ENCODE measurements at regions of chr2 and their contacts with region 1.

Region 1: DNA sequence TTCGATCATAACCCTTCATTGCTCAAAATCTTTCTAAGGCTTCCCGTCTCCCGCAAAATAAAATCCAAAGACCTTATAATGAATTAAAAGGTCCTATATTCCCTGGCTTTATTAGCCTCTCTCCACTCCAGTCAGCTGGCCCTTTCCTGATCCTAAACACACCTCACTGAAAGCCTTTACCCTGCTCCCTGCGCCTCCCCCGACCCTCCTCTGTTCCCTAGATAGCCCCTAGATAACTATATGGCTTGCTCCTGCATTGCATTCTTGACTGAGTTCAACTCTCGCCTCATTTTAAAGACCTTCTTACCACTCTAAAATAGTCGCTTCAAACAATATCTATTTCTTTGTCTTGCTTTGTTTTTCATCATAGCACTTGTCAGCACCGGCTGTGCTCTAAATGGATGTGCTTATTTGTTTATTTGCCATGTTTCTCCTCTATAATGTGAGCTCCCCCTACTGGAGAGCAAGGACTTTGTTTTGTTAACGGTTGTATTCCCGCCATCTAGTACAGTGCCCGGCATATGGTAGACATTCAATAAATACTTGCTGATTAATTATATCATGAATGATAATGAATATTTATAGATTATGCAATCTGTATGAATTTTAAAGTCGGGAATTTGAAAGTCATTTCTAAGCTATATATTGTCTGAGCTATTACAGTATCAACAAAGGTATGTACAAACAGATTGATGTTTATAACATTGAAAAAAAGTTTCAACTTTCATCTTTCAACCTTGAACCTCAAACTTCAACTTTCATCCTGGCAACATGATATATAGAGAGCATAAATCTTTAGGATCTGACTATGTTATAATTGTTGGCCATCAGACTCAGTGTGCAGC is 32.4 kb upstream of the VIT start:
- DNase-seq: peak; percentile 81
- ATAC-seq: peak; percentile 88
- H3K4me3 ChIP-seq: no peak overlapping the region
- H3K27ac ChIP-seq: no peak overlapping the region
- H3K4me1 ChIP-seq: peaks cover 39% of the 10 kb centered on the region
- H3K27me3 ChIP-seq: no peaks in the 10 kb centered on the region
- CTCF ChIP-seq: peak; percentile 89
- EP300 ChIP-seq: no peak
- POLR2A ChIP-seq: no peak
- RAD21 ChIP-seq: peak; percentile 71

Region 2: GRCh38 chr2:35871672-35872071 is 792.4 kb before region 1 on chr2:
- CTCF ChIA-PET with region 1: no interaction called
- POLR2A ChIA-PET with region 1: no interaction called
- in situ Hi-C with region 1: no loop called
- intact Hi-C with region 1: loop called (anchors 2 kb)
- DNase-seq: peak; percentile 15
- ATAC-seq: peak; percentile 85
- H3K4me3 ChIP-seq: no peak overlapping the region
- H3K27ac ChIP-seq: no peak overlapping the region
- H3K4me1 ChIP-seq: no peaks in the 10 kb centered on the region
- H3K27me3 ChIP-seq: no peaks in the 10 kb centered on the region
- CTCF ChIP-seq: peak; percentile 67
- EP300 ChIP-seq: no peak
- POLR2A ChIP-seq: no peak
- RAD21 ChIP-seq: peak; percentile 23; the same call in 1 of the 2 replicates

Region 3: DNA sequence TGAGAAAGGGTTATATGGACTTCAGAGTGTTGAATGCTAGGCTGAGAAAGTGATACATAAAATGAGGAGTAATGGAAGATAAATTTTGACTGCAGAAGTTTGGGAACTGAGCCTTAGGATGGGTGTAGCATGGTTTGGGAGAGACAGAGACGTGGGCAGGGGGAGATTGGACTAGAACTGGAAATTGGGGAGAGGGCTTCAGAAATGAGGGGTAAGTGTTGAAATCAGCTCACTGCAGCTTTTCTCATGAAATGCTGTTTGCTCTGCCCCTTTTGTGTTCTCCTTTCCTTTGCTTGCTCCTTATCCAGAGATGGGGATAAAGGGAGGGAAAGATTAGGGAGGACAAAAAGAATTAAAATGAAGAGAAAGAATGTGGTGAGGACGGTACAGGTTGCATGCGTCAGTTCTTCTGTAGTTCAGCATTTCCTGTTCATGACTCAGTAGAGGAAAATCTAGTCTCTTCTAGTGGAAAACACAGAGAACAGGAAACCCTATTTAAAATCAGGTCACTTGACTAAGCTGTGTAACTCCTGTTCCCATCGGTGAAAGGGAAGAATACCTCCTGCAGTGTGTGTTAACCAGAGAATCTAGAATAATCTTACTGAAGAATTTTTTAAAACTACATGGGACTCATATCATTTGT is 202.9 kb before region 1 on chr2:
- CTCF ChIA-PET with region 1: no interaction called
- POLR2A ChIA-PET with region 1: no interaction called
- in situ Hi-C with region 1: no loop called
- intact Hi-C with region 1: loop called (anchors 5 kb)
- DNase-seq: peak; percentile 46
- ATAC-seq: no peak
- H3K4me3 ChIP-seq: no peak overlapping the region
- H3K27ac ChIP-seq: no peak overlapping the region
- H3K4me1 ChIP-seq: peaks cover 33% of the 10 kb centered on the region
- H3K27me3 ChIP-seq: no peaks in the 10 kb centered on the region
- CTCF ChIP-seq: no peak
- EP300 ChIP-seq: no peak
- POLR2A ChIP-seq: no peak
- RAD21 ChIP-seq: no peak

Region 4: GRCh38 chr2:36539631-36540030 is 124.4 kb before region 1 on chr2:
- CTCF ChIA-PET with region 1: no interaction called
- POLR2A ChIA-PET with region 1: no interaction called
- in situ Hi-C with region 1: loop called (anchors 10 kb)
- intact Hi-C with region 1: no loop called
- DNase-seq: no peak
- ATAC-seq: no peak
- H3K4me3 ChIP-seq: no peak overlapping the region
- H3K27ac ChIP-seq: no peak overlapping the region
- H3K4me1 ChIP-seq: no peaks in the 10 kb centered on the region
- H3K27me3 ChIP-seq: no peaks in the 10 kb centered on the region
- CTCF ChIP-seq: no peak
- EP300 ChIP-seq: no peak
- POLR2A ChIP-seq: no peak
- RAD21 ChIP-seq: no peak

Region 5: DNA sequence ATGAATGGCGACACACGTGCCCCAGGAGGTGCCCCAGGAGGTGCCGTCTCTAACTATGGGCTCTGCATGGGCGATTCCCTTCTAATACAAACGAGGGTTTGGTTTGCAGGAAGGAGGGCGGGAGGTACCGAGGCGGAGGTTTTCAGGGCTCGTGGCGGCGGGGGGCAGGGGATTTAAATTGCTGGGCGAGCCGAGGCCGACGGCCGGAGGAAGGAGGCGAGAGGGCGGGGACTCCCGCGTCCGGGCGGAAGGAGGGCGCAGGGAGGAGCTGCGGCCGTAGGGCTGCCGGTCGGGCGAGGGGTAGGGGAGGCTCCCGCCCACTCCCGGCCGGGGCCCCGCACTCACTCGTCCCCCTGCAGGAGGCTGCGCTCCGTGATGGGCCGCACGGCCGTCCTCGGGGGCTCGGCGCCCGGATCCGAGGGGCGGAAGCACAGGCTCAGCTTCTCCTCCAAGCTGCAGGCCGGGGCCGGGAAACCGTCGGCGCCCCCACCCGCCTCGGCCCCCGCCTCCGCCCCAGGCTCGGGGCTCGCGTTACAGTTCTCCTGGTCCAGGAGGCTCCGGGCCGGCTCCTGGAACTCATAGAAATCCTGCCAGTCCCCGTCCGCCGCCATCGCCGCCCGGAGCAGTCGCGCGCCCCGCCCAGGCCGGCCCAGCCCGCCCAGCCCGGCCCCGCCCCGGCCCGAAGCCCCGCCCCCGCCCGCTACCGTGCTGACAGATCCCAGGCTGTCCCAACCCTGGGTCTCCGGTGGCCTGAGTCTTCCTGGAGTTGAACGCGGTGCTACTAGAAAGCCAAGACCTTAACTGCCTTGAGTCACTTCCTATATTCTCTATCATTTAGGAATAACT is 66.3 kb before region 1 on chr2 and contains the start of gene FEZ2:
- CTCF ChIA-PET with region 1: no interaction called
- POLR2A ChIA-PET with region 1: interaction called, 3 read pairs
- in situ Hi-C with region 1: loop called (anchors 5 kb)
- intact Hi-C with region 1: loop called (anchors 2 kb)
- DNase-seq: peak; percentile 80
- ATAC-seq: peak; percentile 99
- H3K4me3 ChIP-seq: peak within 1 kb of the TSS; percentile 78 to 91 (median 88)
- H3K27ac ChIP-seq: peak within 1 kb of the TSS; percentile 78
- H3K4me1 ChIP-seq: peaks cover 43% of the 10 kb centered on the region
- H3K27me3 ChIP-seq: 0 out of 5 replicates have a peak, but pooled peaks cover 0 to 2% of the 10 kb centered on the region in 2 experiments
- CTCF ChIP-seq: no peak; the same call in 1 of the 2 replicates
- EP300 ChIP-seq: no peak
- POLR2A ChIP-seq: peak; percentile 42 to 72; a peak in 2 of 4 replicates
- RAD21 ChIP-seq: peak; percentile 28
- total RNA-seq, gene FEZ2: 59.1 and 59.3 TPM in 2 replicates

Region 6: GRCh38 chr2:36785179-36785795 is 121.2 kb after region 1 on chr2:
- CTCF ChIA-PET with region 1: no interaction called
- POLR2A ChIA-PET with region 1: no interaction called
- in situ Hi-C with region 1: no loop called
- intact Hi-C with region 1: no loop called
- DNase-seq: peak; percentile 65
- ATAC-seq: peak; percentile 88
- H3K4me3 ChIP-seq: no peak overlapping the region
- H3K27ac ChIP-seq: no peak overlapping the region
- H3K4me1 ChIP-seq: no peaks in the 10 kb centered on the region
- H3K27me3 ChIP-seq: peaks cover 4 to 64% of the 10 kb centered on the region in 2 experiments
- CTCF ChIP-seq: peak; percentile 89
- EP300 ChIP-seq: no peak
- POLR2A ChIP-seq: no peak
- RAD21 ChIP-seq: peak; percentile 53; the same call in 1 of the 2 replicates

Region 7: GRCh38 chr2:37168217-37168981 is 504.3 kb after region 1 on chr2:
- CTCF ChIA-PET with region 1: no interaction called
- POLR2A ChIA-PET with region 1: no interaction called
- in situ Hi-C with region 1: no loop called
- intact Hi-C with region 1: no loop called
- DNase-seq: peak; percentile 55
- ATAC-seq: peak; percentile 93
- H3K4me3 ChIP-seq: peak overlapping the region in 1 of 3 experiments; percentile 35; a peak in 1 of 6 replicates
- H3K27ac ChIP-seq: no peak overlapping the region
- H3K4me1 ChIP-seq: peaks cover 21% of the 10 kb centered on the region
- H3K27me3 ChIP-seq: peaks cover 0 to 4% of the 10 kb centered on the region in 2 experiments; a peak in 1 of 5 replicates
- CTCF ChIP-seq: peak; percentile 82
- EP300 ChIP-seq: no peak
- POLR2A ChIP-seq: no peak
- RAD21 ChIP-seq: peak; percentile 74

Measured in HepG2 (cell line).